ENCODE measurements at regions of chr5 and their contacts with region 1.

Region 1: DNA sequence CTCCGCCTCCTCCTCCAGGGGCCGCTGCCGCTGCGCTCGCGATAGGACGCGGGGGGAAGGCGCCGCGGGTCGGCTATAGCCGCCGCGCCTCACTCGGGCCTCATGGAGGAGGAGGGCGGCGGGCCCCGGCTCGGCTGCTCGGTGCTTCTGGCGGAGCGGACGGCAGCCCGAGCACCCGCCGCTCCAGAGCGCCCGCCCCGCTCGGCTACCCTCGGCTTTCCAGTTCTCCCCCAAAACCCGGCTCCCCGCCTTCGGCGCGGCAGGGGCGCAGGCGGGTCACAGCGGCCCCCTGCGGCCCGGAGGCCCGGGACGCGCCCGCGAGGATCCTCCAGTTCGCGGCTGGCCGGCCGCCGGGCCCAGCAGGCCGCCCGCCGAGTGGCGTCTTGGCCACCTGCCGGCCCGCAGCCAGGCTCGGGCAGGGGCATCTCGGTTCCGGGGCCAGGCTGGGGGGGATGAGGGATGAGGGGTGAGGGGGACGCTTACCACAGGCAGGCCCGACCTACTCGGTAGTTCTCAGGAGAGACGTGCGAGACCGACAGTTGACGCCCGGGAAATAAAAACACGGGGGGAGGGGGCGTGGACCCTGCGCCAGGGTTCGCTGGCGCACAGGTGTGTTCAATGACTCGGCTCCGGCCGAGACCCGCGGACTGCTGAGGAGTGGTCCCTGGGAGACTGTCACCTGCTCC is at the start of gene PAIP1:
- DNase-seq: peak; percentile 77 to 81
- H3K4me3 ChIP-seq: peak within 1 kb of the TSS; percentile 68 to 85
- H3K27ac ChIP-seq: peak within 1 kb of the TSS; percentile 95 to 97
- H3K4me1 ChIP-seq: peaks cover 0 to 7% of the 10 kb centered on the region in 2 donors
- H3K27me3 ChIP-seq: no peaks in the 10 kb centered on the region
- CTCF ChIP-seq: peak; percentile 50 to 76 (median 71)
- POLR2A ChIP-seq: peak; percentile 24 to 51
- total RNA-seq, gene PAIP1: 20.7 to 117 (median 75.8) TPM

Region 2: GRCh38 chr5:42360056-42360455 is 1196.9 kb before region 1 on chr5:
- intact Hi-C with region 1: no loop called
- DNase-seq: no peak
- H3K4me3 ChIP-seq: no peak overlapping the region
- H3K27ac ChIP-seq: no peak overlapping the region
- H3K4me1 ChIP-seq: no peaks in the 10 kb centered on the region
- H3K27me3 ChIP-seq: no peaks in the 10 kb centered on the region
- CTCF ChIP-seq: no peak
- POLR2A ChIP-seq: no peak

Region 3: DNA sequence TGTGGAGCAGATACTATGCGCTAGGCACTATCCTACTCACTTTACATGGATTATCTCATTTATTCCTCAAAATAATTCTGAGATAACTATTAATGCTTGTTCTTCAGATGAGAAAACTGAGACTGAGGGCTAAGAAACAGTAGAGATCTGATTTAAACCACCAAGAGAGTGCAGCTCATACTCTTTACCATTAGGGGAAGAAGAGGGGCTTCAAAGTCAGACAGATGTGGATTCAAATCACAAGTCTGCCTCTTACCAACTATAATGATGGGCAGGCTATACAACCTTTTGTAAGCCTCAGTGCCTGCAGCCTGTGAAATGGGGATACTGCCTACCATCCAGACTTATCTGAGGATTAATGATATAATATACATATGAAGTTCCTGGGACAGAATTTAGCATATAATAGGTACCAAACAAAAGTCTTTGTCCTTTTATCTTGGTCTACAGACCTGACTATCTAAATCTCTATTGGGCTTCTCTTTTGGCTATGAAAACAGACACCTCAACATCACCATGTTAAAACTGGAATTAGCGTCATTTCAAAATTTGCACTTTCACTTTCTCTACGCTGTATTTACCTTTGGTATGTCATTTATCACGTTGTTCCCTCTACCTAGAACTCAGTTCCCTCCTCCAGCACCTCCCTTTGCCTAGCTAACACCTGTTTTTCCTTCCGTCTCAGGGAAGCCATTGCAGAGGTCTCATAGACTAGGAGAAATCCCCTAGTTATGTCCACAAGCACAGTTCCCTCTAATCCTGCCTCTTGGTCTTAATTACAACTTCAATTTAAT is 59.5 kb before region 1 on chr5:
- intact Hi-C with region 1: no loop called
- DNase-seq: no peak
- H3K4me3 ChIP-seq: no peak overlapping the region
- H3K27ac ChIP-seq: no peak overlapping the region
- H3K4me1 ChIP-seq: no peaks in the 10 kb centered on the region
- H3K27me3 ChIP-seq: no peaks in the 10 kb centered on the region
- CTCF ChIP-seq: no peak
- POLR2A ChIP-seq: no peak

Region 4: GRCh38 chr5:43602461-43603343 is 45.7 kb after region 1 on chr5 and contains the start of gene NNT:
- intact Hi-C with region 1: loop called (anchors 10 kb)
- DNase-seq: peak; percentile 62 to 71
- H3K4me3 ChIP-seq: peak within 1 kb of the TSS; percentile 65 to 88
- H3K27ac ChIP-seq: peak within 1 kb of the TSS; percentile 85
- H3K4me1 ChIP-seq: no peaks in the 10 kb centered on the region
- H3K27me3 ChIP-seq: no peaks in the 10 kb centered on the region
- CTCF ChIP-seq: no peak
- POLR2A ChIP-seq: peak in 1 of 2 donors; percentile 25
- total RNA-seq, gene NNT: 25.3 to 112 (median 43.8) TPM

Region 5: DNA sequence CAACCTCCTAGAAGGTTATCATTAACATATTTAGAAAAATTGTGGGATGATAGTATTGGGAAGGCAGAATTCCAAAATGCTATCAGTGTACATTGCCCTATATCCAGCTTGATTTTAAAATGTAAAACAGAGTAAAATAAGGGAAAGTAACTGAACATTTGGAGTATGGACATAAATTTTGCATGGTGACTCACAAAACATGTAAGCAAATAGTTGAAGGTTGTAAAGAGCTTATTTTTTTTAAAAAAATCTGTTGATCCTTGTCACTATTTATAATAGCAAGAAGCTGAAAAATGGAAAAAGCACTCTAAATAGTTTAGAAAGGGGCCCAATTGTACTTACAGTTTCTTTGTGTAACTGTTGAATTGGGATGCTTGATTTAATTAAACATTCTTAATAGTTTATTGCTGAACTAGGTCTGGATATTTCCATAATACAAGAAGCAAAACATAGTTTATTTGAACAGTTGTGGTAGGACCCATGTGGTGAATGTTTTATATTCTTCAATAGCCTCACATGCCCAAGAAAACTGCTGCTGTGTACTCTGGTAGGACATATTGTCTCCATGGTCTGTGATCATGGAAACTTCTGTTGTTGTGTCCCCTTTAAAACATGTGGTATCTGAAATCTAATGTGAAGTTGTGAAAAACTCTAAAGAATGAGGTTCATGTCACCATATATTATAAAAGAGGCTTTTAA is 128.4 kb after region 1 on chr5:
- intact Hi-C with region 1: no loop called
- DNase-seq: no peak
- H3K4me3 ChIP-seq: no peak overlapping the region
- H3K27ac ChIP-seq: peak overlapping the region in 1 of 2 donors; percentile 67
- H3K4me1 ChIP-seq: no peaks in the 10 kb centered on the region
- H3K27me3 ChIP-seq: no peaks in the 10 kb centered on the region
- CTCF ChIP-seq: no peak
- POLR2A ChIP-seq: no peak

Measured in uterus (tissue), 4 donors.